ENCODE measurements at regions of chr2 and their contacts with region 1.

Region 1: GRCh38 chr2:37832590-37833197 is 92.4 kb upstream of the RMDN2 start:
- DNase-seq: peak; percentile 82
- ATAC-seq: peak; percentile 94
- H3K4me3 ChIP-seq: no peak overlapping the region
- H3K4me3 Mint-ChIP-seq: no peak overlapping the region
- H3K27ac ChIP-seq: no peak overlapping the region
- H3K27ac Mint-ChIP-seq: no peak overlapping the region
- H3K4me1 ChIP-seq: no peaks in the 10 kb centered on the region
- H3K4me1 Mint-ChIP-seq: peaks cover 2% of the 10 kb centered on the region
- H3K27me3 ChIP-seq: no peaks in the 10 kb centered on the region
- H3K27me3 Mint-ChIP-seq: no peaks in the 10 kb centered on the region
- CTCF ChIP-seq: peak; percentile 93

Region 2: GRCh38 chr2:37287966-37288365 is 544.7 kb before region 1 on chr2:
- CTCF ChIA-PET with region 1: interaction called, 29 read pairs
- POLR2A ChIA-PET with region 1: no interaction called
- intact Hi-C with region 1: loop called (anchors 1 kb)
- DNase-seq: peak; percentile 34
- ATAC-seq: peak; percentile 54
- H3K4me3 ChIP-seq: no peak overlapping the region
- H3K4me3 Mint-ChIP-seq: no peak overlapping the region
- H3K27ac ChIP-seq: no peak overlapping the region
- H3K27ac Mint-ChIP-seq: no peak overlapping the region
- H3K4me1 ChIP-seq: no peaks in the 10 kb centered on the region
- H3K4me1 Mint-ChIP-seq: peaks cover 14% of the 10 kb centered on the region
- H3K27me3 ChIP-seq: no peaks in the 10 kb centered on the region
- H3K27me3 Mint-ChIP-seq: no peaks in the 10 kb centered on the region
- CTCF ChIP-seq: no peak

Region 3: GRCh38 chr2:37414470-37414949 is 418.2 kb before region 1 on chr2:
- CTCF ChIA-PET with region 1: interaction called, 517 read pairs
- POLR2A ChIA-PET with region 1: interaction called, 3 read pairs
- intact Hi-C with region 1: loop called (anchors 1 kb)
- DNase-seq: peak; percentile 68
- ATAC-seq: peak; percentile 76
- H3K4me3 ChIP-seq: no peak overlapping the region
- H3K4me3 Mint-ChIP-seq: no peak overlapping the region
- H3K27ac ChIP-seq: no peak overlapping the region
- H3K27ac Mint-ChIP-seq: no peak overlapping the region
- H3K4me1 ChIP-seq: no peaks in the 10 kb centered on the region
- H3K4me1 Mint-ChIP-seq: peaks cover 6% of the 10 kb centered on the region
- H3K27me3 ChIP-seq: no peaks in the 10 kb centered on the region
- H3K27me3 Mint-ChIP-seq: no peaks in the 10 kb centered on the region
- CTCF ChIP-seq: peak; percentile 87

Region 4: GRCh38 chr2:37549598-37549997 is 283.1 kb before region 1 on chr2:
- CTCF ChIA-PET with region 1: interaction called, 42 read pairs
- POLR2A ChIA-PET with region 1: no interaction called
- intact Hi-C with region 1: loop called (anchors 1 kb)
- DNase-seq: no peak
- ATAC-seq: no peak
- H3K4me3 ChIP-seq: no peak overlapping the region
- H3K4me3 Mint-ChIP-seq: no peak overlapping the region
- H3K27ac ChIP-seq: no peak overlapping the region
- H3K27ac Mint-ChIP-seq: peak overlapping the region; percentile 26
- H3K4me1 ChIP-seq: peaks cover 29 to 33% of the 10 kb centered on the region in 2 donors
- H3K4me1 Mint-ChIP-seq: peaks cover 43% of the 10 kb centered on the region
- H3K27me3 ChIP-seq: peaks cover 0 to 5% (median 0%) of the 10 kb centered on the region in 4 experiments
- H3K27me3 Mint-ChIP-seq: no peaks in the 10 kb centered on the region
- CTCF ChIP-seq: no peak

Region 5: GRCh38 chr2:38293152-38293865 is 460.6 kb after region 1 on chr2:
- CTCF ChIA-PET with region 1: no interaction called
- POLR2A ChIA-PET with region 1: no interaction called
- intact Hi-C with region 1: no loop called
- DNase-seq: no peak
- ATAC-seq: no peak
- H3K4me3 ChIP-seq: no peak overlapping the region
- H3K4me3 Mint-ChIP-seq: no peak overlapping the region
- H3K27ac ChIP-seq: no peak overlapping the region
- H3K27ac Mint-ChIP-seq: no peak overlapping the region
- H3K4me1 ChIP-seq: no peaks in the 10 kb centered on the region
- H3K4me1 Mint-ChIP-seq: no peaks in the 10 kb centered on the region
- H3K27me3 ChIP-seq: no peaks in the 10 kb centered on the region
- H3K27me3 Mint-ChIP-seq: no peaks in the 10 kb centered on the region
- CTCF ChIP-seq: no peak